HAP-1 (cell line): ENCODE measurements at regions of chr11 and their contacts with region 1.

Region 1: GRCh38 chr11:1502954-1503707 is 16.6 kb upstream of the MOB2 start:
- DNase-seq: no peak
- H3K4me3 ChIP-seq: no peak overlapping the region
- H3K4me1 ChIP-seq: no peaks in the 10 kb centered on the region
- H3K27me3 ChIP-seq: no peaks in the 10 kb centered on the region

Region 2: GRCh38 chr11:1012740-1013630 is 490.1 kb before region 1 on chr11:
- in situ Hi-C with region 1: no loop called
- DNase-seq: no peak
- H3K4me3 ChIP-seq: no peak overlapping the region
- H3K4me1 ChIP-seq: no peaks in the 10 kb centered on the region
- H3K27me3 ChIP-seq: no peaks in the 10 kb centered on the region

Region 3: DNA sequence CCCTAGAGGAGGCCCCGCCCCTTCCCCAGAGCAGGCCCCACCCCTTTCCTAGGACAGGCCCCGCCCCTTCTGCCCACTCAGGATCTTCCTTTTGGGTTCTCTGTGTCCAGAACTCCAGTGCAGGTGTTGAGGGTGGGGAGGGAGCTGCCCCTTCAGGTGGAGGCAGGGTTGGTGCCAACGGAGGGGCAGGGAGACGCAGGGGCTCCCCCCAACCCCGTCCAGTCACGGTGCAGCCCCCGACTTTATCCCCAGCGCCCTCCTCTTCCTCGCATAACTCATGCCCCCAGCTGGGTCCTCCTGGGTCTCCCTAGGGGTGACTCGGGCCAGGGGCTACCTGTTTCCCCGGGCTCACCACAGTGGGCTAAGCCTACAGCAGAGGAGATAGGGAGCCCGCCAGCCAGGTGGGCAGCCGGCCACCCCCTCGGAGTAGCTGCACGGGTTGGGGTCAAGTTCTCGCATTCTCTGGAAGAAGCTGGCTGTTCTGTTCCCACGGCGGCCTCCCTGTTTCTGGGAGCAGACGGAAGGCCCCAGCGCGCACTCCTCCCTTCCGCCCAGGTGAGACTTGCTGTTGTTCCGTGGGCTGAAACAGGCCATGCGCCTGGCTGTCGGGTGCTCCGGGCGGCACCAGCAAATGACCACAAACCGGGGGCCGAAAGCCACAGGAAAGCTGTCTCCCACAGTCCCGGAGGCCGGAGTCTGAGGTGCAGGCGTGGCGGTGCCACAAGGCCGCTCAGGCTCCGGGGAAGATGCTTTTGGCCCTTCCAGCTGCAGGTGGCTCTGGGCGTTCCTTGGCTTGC is 389.5 kb before region 1 on chr11:
- in situ Hi-C with region 1: loop called (anchors 10 kb)
- DNase-seq: no peak
- H3K4me3 ChIP-seq: no peak overlapping the region
- H3K4me1 ChIP-seq: no peaks in the 10 kb centered on the region
- H3K27me3 ChIP-seq: no peaks in the 10 kb centered on the region